Naive thymus-derived CD4-positive, alpha-beta T cell (primary cell): ENCODE measurements at regions of chr4 and their contacts with region 1.

Region 1: GRCh38 chr4:184282251-184282713 is 64.6 kb upstream of the ENPP6 start:
- DNase-seq: peak in 5 of 9 donors; percentile 8 to 56 (median 25)
- ATAC-seq: peak; percentile 75
- H3K4me3 ChIP-seq: no peak overlapping the region
- H3K4me3 Mint-ChIP-seq: peak overlapping the region in 2 of 10 donors; percentile 1 to 25
- H3K27ac ChIP-seq: no peak overlapping the region
- H3K27ac Mint-ChIP-seq: peak overlapping the region in 8 of 9 donors; percentile 17 to 90 (median 64)
- H3K4me1 ChIP-seq: peaks cover 24 to 35% of the 10 kb centered on the region in 2 donors
- H3K4me1 Mint-ChIP-seq: peaks cover 22 to 50% (median 38%) of the 10 kb centered on the region in 7 donors
- H3K27me3 ChIP-seq: no peaks in the 10 kb centered on the region
- H3K27me3 Mint-ChIP-seq: no peaks in the 10 kb centered on the region

Region 2: GRCh38 chr4:184030036-184030435 is 252.2 kb before region 1 on chr4:
- CTCF ChIA-PET with region 1: no interaction called
- POLR2A ChIA-PET with region 1: no interaction called
- intact Hi-C with region 1: no loop called
- DNase-seq: no peak
- ATAC-seq: peak; percentile 33
- H3K4me3 ChIP-seq: no peak overlapping the region
- H3K4me3 Mint-ChIP-seq: no peak overlapping the region
- H3K27ac ChIP-seq: no peak overlapping the region
- H3K27ac Mint-ChIP-seq: no peak overlapping the region
- H3K4me1 ChIP-seq: no peaks in the 10 kb centered on the region
- H3K4me1 Mint-ChIP-seq: peaks cover 16 to 34% (median 26%) of the 10 kb centered on the region in 7 donors
- H3K27me3 ChIP-seq: no peaks in the 10 kb centered on the region
- H3K27me3 Mint-ChIP-seq: peaks cover 12 to 36% (median 18%) of the 10 kb centered on the region in 5 donors

Region 3: DNA sequence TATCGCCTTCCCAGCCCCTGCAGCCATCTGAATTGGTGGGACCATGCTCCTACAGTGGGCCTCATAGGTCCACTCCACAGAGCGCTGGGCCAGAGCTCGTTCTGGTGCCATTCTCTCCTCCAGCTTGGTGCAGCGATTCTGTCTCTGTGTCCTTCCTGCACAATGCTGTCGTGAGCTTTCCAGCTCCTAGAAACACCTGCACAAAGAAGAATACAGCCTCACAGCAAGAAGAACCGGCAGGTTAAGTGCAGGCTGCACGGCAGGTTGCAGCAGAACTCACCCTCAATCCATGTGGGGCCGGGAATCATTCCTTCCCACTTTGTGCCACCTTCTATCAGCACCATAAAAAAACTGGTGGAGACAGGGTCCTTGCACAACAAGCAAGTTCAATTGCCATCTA is 36.6 kb after region 1 on chr4:
- CTCF ChIA-PET with region 1: no interaction called
- POLR2A ChIA-PET with region 1: no interaction called
- intact Hi-C with region 1: loop called in 1 of 2 experiments (anchors 2 kb)
- DNase-seq: no peak
- ATAC-seq: no peak
- H3K4me3 ChIP-seq: no peak overlapping the region
- H3K4me3 Mint-ChIP-seq: peak overlapping the region in 1 of 10 donors; percentile 10
- H3K27ac ChIP-seq: no peak overlapping the region
- H3K27ac Mint-ChIP-seq: peak overlapping the region in 1 of 9 donors; percentile 81
- H3K4me1 ChIP-seq: no peaks in the 10 kb centered on the region
- H3K4me1 Mint-ChIP-seq: peaks cover 5 to 48% (median 13%) of the 10 kb centered on the region in 7 donors
- H3K27me3 ChIP-seq: no peaks in the 10 kb centered on the region
- H3K27me3 Mint-ChIP-seq: no peaks in the 10 kb centered on the region

Region 4: DNA sequence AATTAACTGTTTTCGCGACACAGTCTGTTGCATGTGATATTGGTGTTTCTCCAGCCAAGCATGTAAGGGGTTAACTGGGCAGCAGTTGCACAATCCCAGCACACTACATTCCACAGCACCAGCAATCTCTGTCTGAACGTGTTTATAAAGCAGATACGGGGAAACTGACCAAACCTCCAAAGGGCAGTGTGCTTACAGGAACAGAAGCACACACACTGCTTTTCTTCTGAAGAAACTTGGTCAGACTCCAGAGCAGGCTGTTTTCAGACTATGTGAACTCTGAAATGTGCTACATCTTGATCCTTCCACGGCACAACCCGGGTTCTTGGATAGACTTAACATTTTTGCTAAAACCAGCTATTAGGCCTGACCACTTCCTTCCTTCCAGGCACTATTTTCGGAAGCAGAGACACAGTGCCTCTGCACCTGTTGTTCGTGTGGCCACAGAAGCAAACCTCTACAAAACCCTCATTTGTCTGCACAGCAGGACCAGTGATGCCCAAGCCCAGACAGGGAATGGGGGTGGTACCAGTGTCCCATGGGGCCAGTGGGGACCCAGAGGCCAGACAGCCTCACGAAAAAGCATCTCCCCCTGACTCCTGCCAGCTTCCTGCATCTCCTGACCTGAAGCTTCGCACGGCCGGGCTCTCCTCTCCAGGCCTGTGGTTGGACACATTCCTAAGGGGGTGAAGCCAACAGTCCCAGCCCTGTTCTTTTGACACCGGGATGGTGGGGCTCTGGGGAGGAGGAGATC is 102.0 kb after region 1 on chr4:
- CTCF ChIA-PET with region 1: no interaction called
- POLR2A ChIA-PET with region 1: no interaction called
- intact Hi-C with region 1: loop called in 1 of 2 experiments (anchors 5 kb)
- DNase-seq: peak in 1 of 9 donors; percentile 3
- ATAC-seq: peak; percentile 26
- H3K4me3 ChIP-seq: no peak overlapping the region
- H3K4me3 Mint-ChIP-seq: peak overlapping the region in 9 of 10 donors; percentile 8 to 68 (median 29)
- H3K27ac ChIP-seq: no peak overlapping the region
- H3K27ac Mint-ChIP-seq: peak overlapping the region in 8 of 9 donors; percentile 3 to 86 (median 60)
- H3K4me1 ChIP-seq: peaks cover 24 to 40% of the 10 kb centered on the region in 2 donors
- H3K4me1 Mint-ChIP-seq: peaks cover 41 to 73% (median 63%) of the 10 kb centered on the region in 7 donors
- H3K27me3 ChIP-seq: no peaks in the 10 kb centered on the region
- H3K27me3 Mint-ChIP-seq: no peaks in the 10 kb centered on the region

Region 5: DNA sequence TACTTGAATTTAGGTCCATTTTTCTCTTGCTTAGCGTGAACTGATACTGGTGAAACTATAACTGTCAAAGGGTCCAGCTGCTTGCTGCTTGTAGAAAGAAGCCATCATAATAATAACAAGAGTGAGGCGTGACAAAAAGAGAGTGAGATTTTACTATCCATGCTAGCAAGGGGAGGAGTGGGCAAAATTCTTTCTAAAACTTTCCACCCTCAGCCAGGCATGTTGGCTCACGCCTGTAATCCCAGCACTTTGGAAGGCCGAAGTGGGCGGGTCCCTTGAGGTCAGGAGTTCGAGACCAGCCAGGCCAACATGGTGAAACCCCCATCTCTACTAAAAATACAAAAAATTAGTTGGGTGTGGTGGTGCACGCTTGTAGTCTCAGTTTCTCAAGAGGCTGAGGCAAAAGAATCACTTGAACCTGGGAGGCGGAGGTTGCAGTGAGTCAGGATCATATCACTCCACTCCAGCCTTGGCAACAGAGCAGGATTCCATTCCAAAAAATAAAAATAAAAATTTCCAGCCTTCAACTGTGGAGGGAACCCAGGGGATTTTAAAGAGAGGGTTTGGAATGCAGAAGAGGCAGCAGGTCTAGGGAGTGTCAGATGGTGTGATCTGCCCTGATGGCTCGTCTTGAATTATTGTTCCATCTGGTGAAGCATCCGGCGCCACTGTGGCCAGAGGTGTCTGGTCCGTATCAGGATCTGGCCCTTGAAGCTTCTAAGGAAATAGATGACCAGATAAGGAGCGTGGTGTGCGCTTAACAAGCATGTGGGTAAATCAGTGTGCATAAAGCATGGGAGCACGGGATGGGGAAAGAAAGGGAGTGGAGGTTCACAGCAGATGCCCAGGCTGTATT is 1061.7 kb after region 1 on chr4:
- CTCF ChIA-PET with region 1: no interaction called
- POLR2A ChIA-PET with region 1: no interaction called
- intact Hi-C with region 1: no loop called
- DNase-seq: no peak
- ATAC-seq: no peak
- H3K4me3 ChIP-seq: no peak overlapping the region
- H3K4me3 Mint-ChIP-seq: peak overlapping the region in 3 of 10 donors; percentile 9 to 55 (median 28)
- H3K27ac ChIP-seq: no peak overlapping the region
- H3K27ac Mint-ChIP-seq: peak overlapping the region in 7 of 9 donors; percentile 42 to 85 (median 59)
- H3K4me1 ChIP-seq: peaks cover 3 to 13% of the 10 kb centered on the region in 2 donors
- H3K4me1 Mint-ChIP-seq: peaks cover 11 to 58% (median 28%) of the 10 kb centered on the region in 7 donors
- H3K27me3 ChIP-seq: no peaks in the 10 kb centered on the region
- H3K27me3 Mint-ChIP-seq: no peaks in the 10 kb centered on the region